ENCODE measurements at regions of chr5 and their contacts with region 1.

Region 1: GRCh38 chr5:142012792-142013388 is at the start of gene GNPDA1:
- DNase-seq: peak; percentile 49
- ATAC-seq: peak; percentile 82
- H3K4me3 ChIP-seq: peak within 1 kb of the TSS; percentile 62 to 88
- H3K27ac ChIP-seq: peak within 1 kb of the TSS; percentile 66
- H3K4me1 ChIP-seq: peaks cover 13 to 45% of the 10 kb centered on the region in 2 experiments
- H3K27me3 ChIP-seq: no peaks in the 10 kb centered on the region
- CTCF ChIP-seq: no peak
- POLR2A ChIP-seq: peak; percentile 75
- RAD21 ChIP-seq: no peak
- total RNA-seq, gene GNPDA1: 45.6 TPM

Region 2: DNA sequence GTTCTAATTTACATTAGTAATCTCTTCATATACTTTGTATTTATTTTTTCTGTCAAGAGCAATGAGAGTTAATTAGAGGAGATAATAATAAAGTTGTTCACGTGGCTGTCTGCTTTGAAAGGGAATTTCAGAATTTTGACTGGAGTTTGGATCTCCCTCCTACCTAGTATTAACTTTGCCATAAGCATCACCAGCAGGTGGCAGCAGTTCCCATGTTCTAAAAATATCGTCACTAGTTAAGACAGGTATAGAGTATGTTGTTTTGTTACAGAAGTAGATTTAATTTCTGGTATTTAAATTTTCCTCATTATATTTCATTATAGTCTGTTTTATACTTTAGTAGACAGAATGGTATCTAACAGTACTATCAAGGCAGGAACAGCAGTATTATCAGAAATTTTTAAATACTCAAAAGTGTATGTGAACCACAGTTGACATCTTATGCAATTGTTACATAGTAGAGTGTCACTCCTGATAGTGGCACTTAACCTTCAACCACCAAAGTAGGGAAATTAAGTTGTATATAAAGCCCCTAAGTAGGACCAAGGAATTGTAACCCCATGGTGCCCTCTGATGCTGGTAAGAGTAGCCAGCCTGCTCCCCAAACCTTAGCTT is 20.4 kb before region 1 on chr5:
- CTCF ChIA-PET with region 1: interaction called, 16 read pairs
- POLR2A ChIA-PET with region 1: no interaction called
- RAD21 ChIA-PET with region 1: no interaction called
- intact Hi-C with region 1: no loop called
- DNase-seq: no peak
- ATAC-seq: peak; percentile 88
- H3K4me3 ChIP-seq: no peak overlapping the region
- H3K27ac ChIP-seq: no peak overlapping the region
- H3K4me1 ChIP-seq: no peaks in the 10 kb centered on the region
- H3K27me3 ChIP-seq: no peaks in the 10 kb centered on the region
- CTCF ChIP-seq: peak; percentile 69 to 82 (median 79)
- POLR2A ChIP-seq: no peak
- RAD21 ChIP-seq: peak; percentile 78

Region 3: DNA sequence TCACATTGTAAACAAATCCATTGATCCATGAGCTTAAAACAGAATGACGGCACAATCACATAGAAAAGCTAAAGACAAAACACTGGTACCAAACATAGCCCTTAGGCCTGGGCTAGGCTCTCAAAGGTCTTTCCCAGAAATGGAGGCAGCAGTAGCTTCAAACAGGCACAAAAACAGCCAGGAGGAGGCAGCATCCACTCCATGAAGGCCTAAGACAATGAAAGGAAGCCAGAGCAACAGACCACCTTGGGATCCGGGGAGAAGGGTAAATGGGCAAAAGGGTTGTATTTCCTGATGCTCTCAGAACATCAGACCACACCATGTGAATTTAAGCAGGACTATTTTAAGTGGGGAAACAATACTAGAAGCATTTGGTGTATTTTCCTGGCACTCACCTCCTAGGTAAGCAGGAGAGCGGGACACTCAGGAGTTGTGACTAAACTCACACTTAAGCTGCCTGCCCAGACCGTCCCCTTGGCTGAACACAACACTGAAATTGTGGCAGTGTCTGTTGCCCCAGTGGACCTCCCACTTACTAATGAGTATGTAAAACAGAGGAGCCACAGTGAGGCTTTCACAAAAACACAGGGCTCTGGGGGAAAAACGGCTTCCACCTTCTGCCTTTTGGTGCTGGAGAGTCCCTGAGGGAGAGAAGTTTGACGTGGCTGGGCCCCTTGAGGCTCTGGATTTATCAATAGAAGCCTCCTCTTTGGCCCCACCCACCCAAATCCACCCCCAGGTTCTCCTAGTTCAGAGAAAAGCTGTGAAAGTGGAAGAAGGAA is 12.0 kb before region 1 on chr5:
- CTCF ChIA-PET with region 1: interaction called, 14 read pairs
- POLR2A ChIA-PET with region 1: no interaction called
- RAD21 ChIA-PET with region 1: no interaction called
- intact Hi-C with region 1: no loop called
- DNase-seq: no peak
- ATAC-seq: peak; percentile 74
- H3K4me3 ChIP-seq: no peak overlapping the region
- H3K27ac ChIP-seq: no peak overlapping the region
- H3K4me1 ChIP-seq: no peaks in the 10 kb centered on the region
- H3K27me3 ChIP-seq: no peaks in the 10 kb centered on the region
- CTCF ChIP-seq: peak; percentile 23 to 56 (median 48); a peak in 5 of 6 replicates
- POLR2A ChIP-seq: no peak
- RAD21 ChIP-seq: peak; percentile 51

Region 4: DNA sequence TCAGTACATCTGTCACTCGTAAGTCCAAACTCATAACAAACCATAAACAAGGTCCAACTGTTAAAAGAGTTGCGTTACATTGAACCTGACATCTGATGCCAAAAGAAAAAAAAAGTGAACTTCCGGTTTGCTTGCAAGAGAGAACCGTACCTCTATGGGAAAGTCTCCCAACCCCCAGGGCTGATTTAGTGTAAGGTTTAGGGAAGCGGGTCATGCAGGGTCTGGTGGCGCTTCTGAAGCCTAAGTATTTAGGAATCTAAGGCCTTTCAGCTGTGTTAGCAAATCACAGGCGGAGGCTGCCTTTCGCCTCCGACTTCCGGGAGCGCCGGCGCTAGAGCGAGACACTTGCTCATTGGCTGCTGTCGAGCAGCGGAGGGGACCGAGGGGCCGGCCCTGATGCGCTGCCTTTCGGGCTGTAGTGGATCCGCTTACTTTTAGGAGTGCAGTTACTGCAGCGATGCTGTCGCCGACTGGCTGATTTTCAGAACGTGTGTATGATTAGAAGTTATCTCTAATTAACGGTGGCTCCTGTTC is 11.9 kb after region 1 on chr5:
- CTCF ChIA-PET with region 1: interaction called, 10 read pairs
- POLR2A ChIA-PET with region 1: interaction called, 11 read pairs
- RAD21 ChIA-PET with region 1: no interaction called
- intact Hi-C with region 1: no loop called
- DNase-seq: peak; percentile 68
- ATAC-seq: peak; percentile 100
- H3K4me3 ChIP-seq: peak overlapping the region; percentile 44 to 50
- H3K27ac ChIP-seq: peak overlapping the region; percentile 77
- H3K4me1 ChIP-seq: peaks cover 10 to 15% of the 10 kb centered on the region in 2 experiments; a peak in 3 of 4 replicates
- H3K27me3 ChIP-seq: no peaks in the 10 kb centered on the region
- CTCF ChIP-seq: no peak
- POLR2A ChIP-seq: peak; percentile 74
- RAD21 ChIP-seq: no peak

Region 5: DNA sequence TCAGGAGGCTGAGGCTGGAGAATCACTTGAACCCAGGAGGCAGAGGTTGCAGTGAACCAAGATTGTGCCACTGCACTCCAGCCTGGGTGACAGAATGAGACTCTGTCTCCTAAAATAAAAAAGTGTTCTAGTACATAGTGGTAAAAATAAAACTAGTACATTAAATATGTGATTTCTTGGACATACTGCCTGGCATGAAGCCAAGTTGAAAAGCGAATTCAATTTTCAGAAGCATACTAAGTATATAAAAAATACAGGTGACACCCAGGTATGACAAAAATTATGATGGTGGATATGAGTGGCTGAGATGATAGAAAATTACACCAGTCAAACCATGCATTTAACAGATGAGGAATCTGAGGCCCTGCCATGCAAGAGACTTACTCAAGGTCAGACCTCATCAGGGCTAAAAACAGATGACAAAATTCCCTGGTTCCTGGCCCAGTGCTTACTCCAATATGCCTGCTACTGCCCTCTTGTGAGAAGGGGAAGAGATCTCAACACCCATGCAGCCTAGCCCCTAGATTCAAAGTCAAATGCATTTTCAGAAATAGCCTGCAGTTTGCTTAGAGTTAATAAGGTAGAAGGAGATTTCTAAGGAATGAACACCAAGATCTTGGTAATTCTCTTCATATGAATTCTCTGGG is 46.5 kb after region 1 on chr5:
- CTCF ChIA-PET with region 1: interaction called, 4 read pairs
- POLR2A ChIA-PET with region 1: interaction called, 4 read pairs
- RAD21 ChIA-PET with region 1: no interaction called
- intact Hi-C with region 1: loop called (anchors 2 kb)
- DNase-seq: peak; percentile 35
- ATAC-seq: peak; percentile 57
- H3K4me3 ChIP-seq: no peak overlapping the region
- H3K27ac ChIP-seq: no peak overlapping the region
- H3K4me1 ChIP-seq: peaks cover 13 to 33% of the 10 kb centered on the region in 2 experiments
- H3K27me3 ChIP-seq: no peaks in the 10 kb centered on the region
- CTCF ChIP-seq: peak in 2 of 3 experiments; percentile 31 to 48; a peak in 3 of 6 replicates
- POLR2A ChIP-seq: no peak
- RAD21 ChIP-seq: peak; percentile 39

Measured in HCT116 (cell line).